BJ (cell line): ENCODE measurements at regions of chr10 and their contacts with region 1.

Region 1: DNA sequence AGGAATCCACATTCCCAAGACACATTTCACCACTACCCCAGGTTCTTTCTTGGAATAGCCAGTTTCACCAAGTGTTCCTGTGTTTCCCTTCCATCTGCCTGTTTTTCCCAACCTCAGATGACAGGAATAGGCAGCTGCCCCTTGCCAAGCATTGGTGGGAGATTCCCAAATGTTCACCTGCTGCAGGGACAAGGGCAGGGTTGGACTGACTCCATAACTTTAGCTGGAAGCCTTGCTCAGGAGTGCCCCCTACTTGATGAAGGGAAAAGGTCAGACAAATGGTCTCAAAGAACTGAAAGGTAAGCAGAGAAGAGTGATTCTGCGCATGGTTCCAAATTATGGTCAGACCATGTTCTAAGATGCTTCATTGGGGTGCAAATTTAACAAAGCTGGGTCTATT is 45.1 kb upstream of the LYZL1 start:
- DNase-seq: no peak
- H3K4me3 ChIP-seq: no peak overlapping the region
- H3K27me3 ChIP-seq: peaks cover 9% of the 10 kb centered on the region
- CTCF ChIP-seq: peak; percentile 46

Region 2: GRCh38 chr10:29254123-29255046 is 10.6 kb after region 1 on chr10:
- CTCF ChIA-PET with region 1: interaction called, 20 read pairs
- POLR2A ChIA-PET with region 1: no interaction called
- DNase-seq: no peak
- H3K4me3 ChIP-seq: no peak overlapping the region
- H3K27me3 ChIP-seq: peaks cover 32% of the 10 kb centered on the region
- CTCF ChIP-seq: no peak